Activated CD8-positive, alpha-beta T cell treated with anti-CD3 and anti-CD28 coated beads for 36 hours (primary cell): ENCODE measurements at regions of chr15 and their contacts with region 1.

Region 1: GRCh38 chr15:92903941-92904831 is 4.1 kb downstream of the CHD2 start:
- DNase-seq: peak; percentile 99
- ATAC-seq: peak; percentile 81
- H3K4me3 Mint-ChIP-seq: peak overlapping the region; percentile 99
- H3K27ac Mint-ChIP-seq: peak overlapping the region; percentile 100
- H3K4me1 Mint-ChIP-seq: peaks cover 49% of the 10 kb centered on the region
- H3K27me3 Mint-ChIP-seq: no peaks in the 10 kb centered on the region
- CTCF ChIP-seq: no peak

Region 2: DNA sequence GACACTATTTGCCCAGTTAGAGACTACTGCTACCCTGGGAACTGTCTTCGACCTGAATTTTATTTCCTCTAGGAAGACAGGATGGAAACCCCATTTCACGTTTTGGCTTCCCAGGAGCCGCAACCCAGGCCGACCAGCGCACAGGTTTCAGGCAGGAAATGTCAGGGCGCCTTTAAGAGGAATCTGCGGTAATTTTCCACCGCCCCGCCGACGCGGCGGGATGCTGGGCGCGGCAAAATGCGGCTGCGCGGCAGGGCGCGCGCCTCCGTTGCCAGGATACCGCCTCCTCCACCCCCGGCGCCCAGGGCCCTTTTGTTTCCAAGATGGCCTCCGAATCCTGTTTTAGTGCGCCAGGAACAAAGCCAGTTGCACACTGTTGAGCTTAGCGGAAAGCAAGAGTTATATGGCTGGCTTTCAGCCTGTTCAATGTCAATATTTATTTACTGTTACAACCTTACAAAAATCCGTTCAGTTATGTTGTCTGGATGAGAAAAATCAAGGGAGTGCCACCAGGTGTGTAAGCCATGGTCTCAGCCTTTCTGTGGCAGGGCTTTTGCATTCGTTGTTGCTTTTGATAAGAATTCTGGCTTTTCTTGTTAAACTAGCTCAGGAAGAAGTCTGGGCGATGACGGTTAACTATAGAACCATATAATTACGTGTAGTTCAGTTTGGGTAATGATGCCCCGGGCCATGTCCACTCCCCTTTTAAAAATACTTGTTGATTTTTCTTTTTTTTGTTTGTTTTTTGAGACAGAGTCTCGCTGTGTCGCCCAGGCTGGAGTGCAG is 83.8 kb before region 1 on chr15:
- CTCF ChIA-PET with region 1: interaction called, 3 read pairs
- POLR2A ChIA-PET with region 1: interaction called, 18 read pairs
- intact Hi-C with region 1: no loop called
- DNase-seq: peak; percentile 88
- ATAC-seq: peak; percentile 75
- H3K4me3 Mint-ChIP-seq: peak overlapping the region; percentile 82
- H3K27ac Mint-ChIP-seq: peak overlapping the region; percentile 94
- H3K4me1 Mint-ChIP-seq: peaks cover 63% of the 10 kb centered on the region
- H3K27me3 Mint-ChIP-seq: no peaks in the 10 kb centered on the region
- CTCF ChIP-seq: no peak

Region 3: DNA sequence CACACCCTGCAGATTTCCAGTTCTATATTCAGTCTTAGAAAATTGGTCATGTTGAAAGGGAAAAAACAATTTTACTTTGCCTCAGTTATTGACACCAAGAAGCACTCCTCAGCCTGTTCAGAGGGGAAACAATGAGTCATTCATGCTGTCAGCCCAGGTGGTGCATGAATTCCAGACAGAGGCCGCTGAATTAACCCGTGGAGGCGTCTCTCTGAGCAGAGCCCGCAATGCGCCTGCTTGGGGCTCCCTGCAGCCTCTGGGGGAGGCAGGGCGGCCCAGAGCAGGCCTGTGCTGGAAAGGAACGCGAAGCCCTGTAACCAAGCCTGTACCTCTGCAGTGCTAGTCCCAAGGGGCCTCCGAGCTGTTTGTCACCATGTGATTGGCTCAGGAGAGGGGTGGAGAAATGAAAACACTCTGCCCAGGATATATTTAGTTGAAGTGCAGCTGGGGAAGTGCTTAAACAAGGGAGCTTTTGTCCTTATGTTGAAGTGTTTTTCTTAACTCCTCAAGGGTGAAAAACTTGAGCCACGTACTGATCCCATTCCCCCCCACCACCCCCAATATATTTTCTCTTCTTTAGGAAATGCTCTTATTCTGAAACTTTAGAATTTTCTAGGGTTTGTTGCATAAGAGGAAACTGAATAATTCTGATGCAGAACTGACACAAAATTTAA is 72.4 kb before region 1 on chr15:
- CTCF ChIA-PET with region 1: interaction called, 5 read pairs
- POLR2A ChIA-PET with region 1: interaction called, 13 read pairs
- intact Hi-C with region 1: loop called (anchors 5 kb)
- DNase-seq: peak; percentile 96
- ATAC-seq: peak; percentile 96
- H3K4me3 Mint-ChIP-seq: peak overlapping the region; percentile 66
- H3K27ac Mint-ChIP-seq: peak overlapping the region; percentile 95
- H3K4me1 Mint-ChIP-seq: peaks cover 43% of the 10 kb centered on the region
- H3K27me3 Mint-ChIP-seq: no peaks in the 10 kb centered on the region
- CTCF ChIP-seq: no peak

Region 4: DNA sequence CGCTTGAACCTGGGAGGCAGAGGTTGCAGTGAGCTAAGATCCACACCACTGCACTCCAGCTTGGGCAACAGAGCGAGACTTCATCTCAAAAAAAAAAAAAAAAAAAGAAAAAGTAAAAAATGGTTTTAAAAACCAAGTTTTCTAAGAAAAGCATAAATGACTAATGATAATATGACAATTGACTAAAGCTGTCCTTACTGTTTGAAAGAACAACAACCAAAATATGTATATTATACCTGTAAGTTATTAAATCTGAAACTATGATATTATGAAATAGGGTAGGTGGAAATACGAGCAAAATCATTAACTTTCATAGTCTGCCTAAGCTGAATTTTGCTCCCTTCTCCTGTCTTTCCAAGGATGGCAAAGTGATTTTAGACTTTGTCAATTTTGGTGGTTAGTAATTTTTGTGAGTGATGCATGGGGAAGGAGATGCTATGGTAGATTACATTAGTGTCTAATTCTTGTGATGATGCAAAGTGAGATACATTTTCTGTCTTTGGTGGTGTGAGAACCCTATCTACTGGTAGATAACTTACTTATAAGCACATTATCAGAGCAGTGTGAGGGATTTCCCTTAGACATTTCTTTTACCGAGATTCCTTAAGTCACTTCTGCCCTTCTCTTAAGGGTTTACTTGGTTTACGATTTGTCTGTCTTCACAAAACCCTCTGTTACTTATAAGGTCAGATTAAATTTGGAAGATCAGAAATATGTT is 14.6 kb before region 1 on chr15:
- CTCF ChIA-PET with region 1: interaction called, 64 read pairs
- POLR2A ChIA-PET with region 1: interaction called, 642 read pairs
- intact Hi-C with region 1: no loop called
- DNase-seq: no peak
- ATAC-seq: peak; percentile 53
- H3K4me3 Mint-ChIP-seq: peak overlapping the region; percentile 69
- H3K27ac Mint-ChIP-seq: peak overlapping the region; percentile 93
- H3K4me1 Mint-ChIP-seq: peaks cover 64% of the 10 kb centered on the region
- H3K27me3 Mint-ChIP-seq: no peaks in the 10 kb centered on the region
- CTCF ChIP-seq: no peak